A549 (cell line): ENCODE measurements at regions of chr15 and their contacts with region 1.

Region 1: GRCh38 chr15:73127301-73127936 is 75.2 kb downstream of the NEO1 start:
- DNase-seq: peak; percentile 52 to 58
- ATAC-seq: peak; percentile 91 to 96
- H3K4me3 ChIP-seq: no peak overlapping the region
- H3K27ac ChIP-seq: no peak overlapping the region
- H3K4me1 ChIP-seq: no peaks in the 10 kb centered on the region
- CTCF ChIP-seq: peak; percentile 89
- EP300 ChIP-seq: no peak
- POLR2A ChIP-seq: no peak
- RAD21 ChIP-seq: peak; percentile 46 to 52; a peak in 4 of 5 replicates

Region 2: DNA sequence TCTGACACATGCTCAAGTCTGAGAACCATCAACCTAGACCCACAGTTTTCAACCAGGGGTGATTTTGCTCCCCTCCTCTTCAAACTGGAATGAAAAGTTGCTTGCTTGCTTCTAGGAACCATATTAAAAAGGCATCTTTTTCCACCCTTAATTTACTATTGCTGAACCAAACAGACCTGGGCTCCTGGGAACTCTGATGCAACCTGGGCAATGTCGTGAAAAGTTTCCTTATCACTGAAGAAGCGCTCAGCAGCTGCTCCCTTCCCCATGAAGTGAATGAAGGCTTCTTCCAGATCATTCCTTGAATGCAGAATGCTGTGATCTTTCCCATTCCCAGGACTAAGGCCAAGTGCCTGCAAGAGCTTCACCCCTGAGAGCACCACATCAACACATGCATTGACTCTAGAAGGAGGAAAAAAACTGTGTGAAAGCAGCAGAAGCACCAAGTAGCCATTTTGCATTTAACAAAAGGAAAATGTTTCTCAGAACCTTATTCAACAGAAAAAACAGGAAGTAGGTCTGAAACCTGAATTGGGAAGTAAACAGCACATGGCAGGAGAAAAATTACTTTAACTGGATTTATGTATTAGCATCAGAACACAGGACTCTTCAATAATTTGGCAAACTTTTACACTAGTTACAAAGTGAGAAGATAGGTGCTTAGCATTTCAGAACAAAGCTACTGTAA is 352.6 kb before region 1 on chr15:
- CTCF ChIA-PET with region 1: no interaction called
- POLR2A ChIA-PET with region 1: no interaction called
- DNase-seq: no peak
- ATAC-seq: no peak
- H3K4me3 ChIP-seq: no peak overlapping the region
- H3K27ac ChIP-seq: no peak overlapping the region
- H3K4me1 ChIP-seq: no peaks in the 10 kb centered on the region
- CTCF ChIP-seq: no peak
- EP300 ChIP-seq: no peak
- POLR2A ChIP-seq: no peak
- RAD21 ChIP-seq: no peak

Region 3: DNA sequence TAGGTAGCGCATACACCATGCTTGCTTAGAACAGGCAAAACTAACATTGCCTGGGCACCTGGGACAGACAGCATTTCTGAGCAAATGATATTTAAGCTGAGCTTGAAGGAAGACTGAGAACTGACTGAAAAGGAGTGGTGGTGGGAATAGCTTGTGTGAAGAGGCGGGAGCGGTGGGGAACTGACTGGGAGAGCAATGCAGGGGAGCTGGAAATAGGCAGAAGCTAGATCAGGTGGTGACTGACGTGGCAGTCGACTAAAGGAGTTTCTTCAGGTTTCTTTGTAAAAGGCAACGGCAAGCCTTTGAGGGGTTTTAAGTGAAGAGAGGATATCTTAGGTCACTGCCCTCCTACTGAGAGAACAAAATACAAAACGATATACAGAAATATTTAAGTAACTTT is 13.4 kb before region 1 on chr15:
- CTCF ChIA-PET with region 1: interaction called, 10 read pairs
- POLR2A ChIA-PET with region 1: no interaction called
- DNase-seq: no peak
- ATAC-seq: no peak
- H3K4me3 ChIP-seq: no peak overlapping the region
- H3K27ac ChIP-seq: no peak overlapping the region
- H3K4me1 ChIP-seq: no peaks in the 10 kb centered on the region
- CTCF ChIP-seq: no peak
- EP300 ChIP-seq: no peak
- POLR2A ChIP-seq: no peak
- RAD21 ChIP-seq: no peak

Region 4: DNA sequence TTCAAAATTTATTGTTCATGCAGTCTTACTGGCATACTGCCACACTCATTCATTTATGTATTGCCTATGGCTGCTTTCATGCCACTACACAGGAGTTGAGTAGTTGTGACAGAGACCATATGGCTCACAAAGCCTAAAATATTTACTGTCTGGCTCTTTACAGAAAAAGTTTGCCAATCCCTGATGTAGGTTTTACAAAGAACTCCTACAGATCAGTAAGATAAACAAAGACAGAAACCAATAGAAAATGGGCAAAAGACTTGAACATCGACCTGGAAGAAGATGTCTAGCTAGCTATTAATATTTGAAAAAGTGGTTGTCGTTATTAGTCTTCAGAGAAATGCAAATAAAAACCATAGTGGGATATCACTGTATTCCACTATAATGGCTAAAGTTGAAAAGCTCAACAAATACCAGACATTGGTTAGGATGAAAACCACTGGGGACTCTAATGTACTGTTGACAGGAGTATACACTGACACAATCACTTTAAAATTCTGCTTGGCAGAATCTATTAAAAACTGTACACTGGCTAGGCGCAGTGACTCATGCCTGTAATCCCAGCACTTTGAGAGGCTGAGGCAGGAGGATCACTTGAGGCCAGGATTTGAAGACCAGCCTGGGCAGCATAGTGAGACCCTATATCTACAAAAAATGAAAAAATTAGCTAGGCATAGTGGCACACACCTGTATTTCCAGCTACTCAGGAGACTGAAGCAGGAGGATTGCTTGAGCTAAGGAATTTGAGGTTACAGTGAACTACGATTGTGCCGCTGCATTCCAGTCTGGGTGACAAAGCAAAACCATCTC is 12.5 kb after region 1 on chr15:
- CTCF ChIA-PET with region 1: interaction called, 15 read pairs
- POLR2A ChIA-PET with region 1: no interaction called
- DNase-seq: no peak
- ATAC-seq: no peak
- H3K4me3 ChIP-seq: no peak overlapping the region
- H3K27ac ChIP-seq: no peak overlapping the region
- H3K4me1 ChIP-seq: peaks cover 15% of the 10 kb centered on the region
- CTCF ChIP-seq: no peak
- EP300 ChIP-seq: no peak
- POLR2A ChIP-seq: no peak
- RAD21 ChIP-seq: no peak